ENCODE measurements at regions of chr1 and their contacts with region 1.

Region 1: GRCh38 chr1:205919026-205919746 is 24.1 kb downstream of the SLC26A9 start:
- DNase-seq: peak; percentile 76
- H3K4me3 ChIP-seq: no peak overlapping the region
- H3K27ac ChIP-seq: no peak overlapping the region
- H3K4me1 ChIP-seq: no peaks in the 10 kb centered on the region
- H3K27me3 ChIP-seq: no peaks in the 10 kb centered on the region
- CTCF ChIP-seq: peak; percentile 82 to 90 (median 86)
- EP300 ChIP-seq: no peak
- POLR2A ChIP-seq: no peak

Region 2: DNA sequence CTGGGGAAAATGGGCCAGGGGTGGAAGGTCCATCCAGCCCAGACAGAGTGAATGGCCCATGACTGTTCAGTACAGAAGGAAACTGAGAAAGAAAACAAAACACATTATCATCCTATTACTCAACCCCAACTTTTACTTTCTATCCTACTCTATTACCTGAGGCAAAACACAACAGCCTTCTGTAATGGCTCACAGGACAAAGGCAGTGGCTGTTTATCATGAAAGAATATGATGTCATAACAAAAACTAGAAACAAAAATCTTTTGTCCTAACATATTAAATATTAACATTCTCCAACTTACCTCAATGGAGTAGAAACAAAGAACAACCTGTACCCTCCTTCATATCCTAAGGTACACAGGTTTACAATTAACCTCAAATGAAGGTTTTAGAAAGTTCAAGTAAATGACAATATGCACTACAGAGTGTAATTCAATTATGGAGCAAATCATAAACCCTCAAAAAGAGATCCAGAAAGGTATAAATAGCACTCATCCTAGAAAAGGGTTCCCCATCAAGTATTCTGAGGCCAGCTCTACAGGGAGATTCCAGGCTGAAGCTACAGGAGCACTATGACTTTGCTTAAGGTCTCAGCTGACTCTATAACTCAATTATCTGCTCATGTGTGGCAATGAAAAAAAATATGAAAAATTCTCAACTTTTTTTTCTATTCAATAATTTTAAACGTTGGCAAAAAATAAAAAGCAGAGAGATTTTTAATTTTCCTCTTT is 302.5 kb before region 1 on chr1:
- in situ Hi-C with region 1: no loop called
- intact Hi-C with region 1: no loop called
- DNase-seq: peak; percentile 17
- H3K4me3 ChIP-seq: no peak overlapping the region
- H3K27ac ChIP-seq: peak overlapping the region in 2 of 4 donors; percentile 10 to 39
- H3K4me1 ChIP-seq: peaks cover 0 to 9% (median 3%) of the 10 kb centered on the region in 4 donors
- H3K27me3 ChIP-seq: no peaks in the 10 kb centered on the region
- CTCF ChIP-seq: no peak
- EP300 ChIP-seq: no peak
- POLR2A ChIP-seq: no peak

Region 3: GRCh38 chr1:205775015-205775716 is 144.0 kb before region 1 on chr1 and contains the start of gene RAB29:
- in situ Hi-C with region 1: loop called in 1 of 4 experiments (anchors 25 kb)
- intact Hi-C with region 1: no loop called
- DNase-seq: peak; percentile 82
- H3K4me3 ChIP-seq: peak within 1 kb of the TSS; percentile 39 to 82 (median 66)
- H3K27ac ChIP-seq: peak within 1 kb of the TSS; percentile 55 to 78 (median 70)
- H3K4me1 ChIP-seq: peaks cover 0 to 16% (median 4%) of the 10 kb centered on the region in 4 donors
- H3K27me3 ChIP-seq: no peaks in the 10 kb centered on the region
- CTCF ChIP-seq: no peak
- EP300 ChIP-seq: no peak
- POLR2A ChIP-seq: peak; percentile 25
- total RNA-seq, gene RAB29: 1.1 to 13.9 (median 10.2) TPM

Region 4: GRCh38 chr1:205791568-205792180 is 127.5 kb before region 1 on chr1:
- in situ Hi-C with region 1: loop called in 2 of 4 experiments (anchors 10 to 25 kb)
- intact Hi-C with region 1: no loop called
- DNase-seq: peak; percentile 63
- H3K4me3 ChIP-seq: no peak overlapping the region
- H3K27ac ChIP-seq: no peak overlapping the region
- H3K4me1 ChIP-seq: no peaks in the 10 kb centered on the region
- H3K27me3 ChIP-seq: no peaks in the 10 kb centered on the region
- CTCF ChIP-seq: peak; percentile 65 to 78 (median 70)
- EP300 ChIP-seq: no peak
- POLR2A ChIP-seq: no peak

Region 5: DNA sequence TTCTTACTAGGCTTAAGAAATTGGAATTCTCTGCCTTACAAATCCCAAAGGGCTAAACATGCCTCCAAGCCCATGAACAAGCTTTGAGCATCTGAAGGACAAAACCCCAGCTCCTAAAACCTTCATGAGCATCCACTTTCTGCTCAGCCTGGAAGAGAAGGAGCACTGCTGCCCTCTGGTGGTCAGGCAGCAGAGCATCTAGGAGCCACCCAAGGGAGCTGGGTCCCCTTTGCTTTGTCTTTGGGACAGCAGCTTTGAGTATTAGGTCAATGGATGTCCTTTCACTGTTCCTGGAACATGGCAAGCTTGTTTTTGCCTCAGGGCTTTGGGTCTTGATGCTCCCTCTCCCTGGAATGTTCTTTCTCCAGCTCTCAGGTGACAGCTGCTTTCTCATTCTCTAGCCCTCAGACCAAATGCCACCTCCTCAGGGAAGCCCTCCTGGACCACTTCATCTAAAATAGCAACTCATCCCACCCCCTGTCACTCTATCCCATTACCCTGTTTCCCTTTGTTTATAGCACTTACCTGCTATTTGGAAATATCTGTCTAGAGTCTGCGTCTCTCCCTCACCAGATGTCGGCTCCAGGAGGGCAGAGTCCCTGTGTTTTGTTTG is 58.3 kb after region 1 on chr1:
- in situ Hi-C with region 1: no loop called
- intact Hi-C with region 1: loop called (anchors 5 kb)
- DNase-seq: peak; percentile 68
- H3K4me3 ChIP-seq: no peak overlapping the region
- H3K27ac ChIP-seq: no peak overlapping the region
- H3K4me1 ChIP-seq: no peaks in the 10 kb centered on the region
- H3K27me3 ChIP-seq: no peaks in the 10 kb centered on the region
- CTCF ChIP-seq: peak; percentile 91 to 96 (median 93)
- EP300 ChIP-seq: no peak
- POLR2A ChIP-seq: no peak

Region 6: GRCh38 chr1:205988585-205988995 is 69.4 kb after region 1 on chr1:
- in situ Hi-C with region 1: no loop called
- intact Hi-C with region 1: no loop called
- DNase-seq: no peak
- H3K4me3 ChIP-seq: no peak overlapping the region
- H3K27ac ChIP-seq: no peak overlapping the region
- H3K4me1 ChIP-seq: no peaks in the 10 kb centered on the region
- H3K27me3 ChIP-seq: no peaks in the 10 kb centered on the region
- CTCF ChIP-seq: no peak
- EP300 ChIP-seq: no peak
- POLR2A ChIP-seq: no peak

Region 7: DNA sequence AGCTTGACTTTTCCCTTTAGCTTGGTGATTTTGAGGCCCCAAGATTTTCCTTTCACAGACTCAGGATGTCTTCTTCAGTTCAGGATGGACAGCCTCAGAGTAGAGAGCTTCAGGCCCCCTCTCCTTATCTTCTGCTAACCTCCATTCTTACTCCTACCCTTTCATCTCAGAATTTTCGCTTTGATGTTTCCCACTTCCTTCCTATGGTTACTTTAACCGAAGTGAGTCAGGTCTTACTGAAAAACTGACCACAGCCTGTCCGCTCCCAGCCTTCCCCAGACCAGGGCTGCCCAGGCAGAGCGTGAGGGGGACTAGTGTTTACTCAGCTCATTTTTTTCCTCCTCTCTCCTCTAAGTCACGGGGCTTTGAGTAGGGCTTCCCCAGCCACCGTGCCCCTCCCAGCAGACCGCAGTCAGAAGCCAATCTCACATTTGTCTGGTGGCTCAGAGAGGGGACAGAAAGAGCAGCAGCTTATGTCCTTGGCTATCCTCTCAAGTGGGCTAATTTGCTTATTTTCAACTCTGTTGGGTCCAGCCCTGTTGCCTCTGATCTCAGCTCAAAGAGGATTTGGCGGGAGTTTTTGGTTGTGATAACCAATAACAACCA is 847.2 kb after region 1 on chr1:
- in situ Hi-C with region 1: no loop called
- intact Hi-C with region 1: no loop called
- DNase-seq: peak; percentile 60
- H3K4me3 ChIP-seq: no peak overlapping the region
- H3K27ac ChIP-seq: no peak overlapping the region
- H3K4me1 ChIP-seq: peaks cover 0 to 4% (median 0%) of the 10 kb centered on the region in 4 donors
- H3K27me3 ChIP-seq: peaks cover 6% of the 10 kb centered on the region
- CTCF ChIP-seq: no peak
- EP300 ChIP-seq: no peak
- POLR2A ChIP-seq: no peak